Activated T-helper 1 cell treated with anti-CD3 and anti-CD28 coated beads, Interleukin-12 subunit alpha, Interleukin-12 subunit beta, Interleukin-2, Interleukin-4 antibody, amounts not matched to agents 30 ng/mL and 10 ng/mL and 1 ng/mL, durations not matched to agents 14 hours and 24 hours and 36 hours (primary cell): ENCODE measurements at regions of chr14 and their contacts with region 1.

Region 1: GRCh38 chr14:55051426-55052268 is at the start of gene MAPK1IP1L:
- DNase-seq: peak; percentile 90
- H3K4me3 Mint-ChIP-seq: peak within 1 kb of the TSS; percentile 94
- H3K27ac Mint-ChIP-seq: peak within 1 kb of the TSS; percentile 95
- H3K4me1 Mint-ChIP-seq: peaks cover 37% of the 10 kb centered on the region
- H3K27me3 Mint-ChIP-seq: no peaks in the 10 kb centered on the region
- total RNA-seq, gene MAPK1IP1L: 139 and 141 TPM in 2 replicates

Region 2: DNA sequence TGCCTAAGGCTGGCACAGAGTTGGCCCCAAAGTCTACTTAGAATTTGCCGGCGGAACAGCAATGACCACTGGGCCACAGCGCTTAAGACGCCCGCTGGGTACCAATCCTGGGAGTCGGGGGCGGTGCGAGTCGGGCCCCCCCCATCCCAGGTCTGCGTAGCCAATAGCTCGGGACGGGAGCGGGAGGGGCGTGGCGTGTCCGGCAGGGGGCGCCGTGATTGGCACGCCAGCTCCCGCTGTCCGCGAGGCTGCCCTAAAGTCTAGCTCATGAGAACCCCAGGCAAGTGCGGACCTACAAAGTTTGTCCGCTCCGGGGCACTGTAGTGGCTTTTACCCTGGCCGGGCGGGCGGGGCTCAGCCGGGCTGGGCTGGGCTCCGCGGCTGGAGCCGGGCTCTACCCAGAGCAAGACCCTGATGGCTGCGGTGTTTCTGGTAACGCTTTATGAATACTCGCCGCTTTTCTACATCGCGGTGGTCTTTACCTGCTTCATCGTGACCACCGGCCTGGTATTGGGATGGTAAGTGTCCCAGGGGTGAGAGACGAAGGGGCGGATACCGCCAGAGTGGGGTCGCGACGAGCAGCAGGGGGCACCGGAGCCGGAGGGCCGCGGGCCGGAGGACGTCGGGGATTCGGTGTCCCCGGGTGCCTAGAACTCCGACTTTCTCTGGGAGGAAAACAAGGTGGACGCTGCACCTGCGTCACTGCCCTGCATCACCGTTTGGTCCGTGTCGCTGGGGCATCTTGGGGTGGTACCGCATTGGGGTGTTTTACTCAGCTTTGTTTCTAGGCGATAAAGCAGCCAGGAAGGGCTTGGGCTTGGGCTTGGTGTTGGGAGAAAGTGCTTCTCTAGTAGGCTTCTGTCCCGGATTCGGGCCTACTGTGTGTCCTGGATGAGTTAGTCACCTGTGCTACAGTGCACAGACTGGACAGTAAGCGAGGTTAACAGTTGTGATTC is 541.8 kb before region 1 on chr14 and contains the start of gene CGRRF1:
- intact Hi-C with region 1: loop called (anchors 1 kb)
- DNase-seq: peak; percentile 94
- H3K4me3 Mint-ChIP-seq: peak within 1 kb of the TSS; percentile 95
- H3K27ac Mint-ChIP-seq: peak within 1 kb of the TSS; percentile 83
- H3K4me1 Mint-ChIP-seq: peaks cover 40% of the 10 kb centered on the region
- H3K27me3 Mint-ChIP-seq: peaks cover 8% of the 10 kb centered on the region
- total RNA-seq, gene CGRRF1: 8.5 and 13.2 TPM in 2 replicates

Region 3: DNA sequence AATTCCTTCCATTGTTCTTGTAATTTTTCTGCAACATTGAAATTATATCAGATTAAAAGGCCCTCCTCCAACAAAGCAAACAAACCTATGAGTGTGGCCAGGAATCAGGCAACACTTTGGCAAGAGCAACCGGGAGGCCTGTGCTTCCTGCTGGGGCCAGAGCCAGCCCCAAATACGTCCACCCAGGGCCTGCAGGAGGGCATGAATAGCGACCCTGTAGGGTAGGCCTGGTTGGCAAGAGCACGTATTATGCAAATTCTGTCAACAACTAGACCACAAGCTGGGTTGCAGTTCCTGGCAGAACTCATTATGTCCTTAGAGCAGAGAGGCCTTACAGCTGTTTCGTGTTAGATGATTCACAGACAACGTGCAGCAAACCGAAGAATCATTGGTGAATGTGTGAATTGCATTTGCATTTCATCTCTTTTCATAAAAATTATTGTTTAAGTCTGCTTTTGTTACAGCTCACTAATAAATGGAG is 50.5 kb after region 1 on chr14:
- intact Hi-C with region 1: loop called (anchors 2 kb)
- DNase-seq: peak; percentile 41
- H3K4me3 Mint-ChIP-seq: peak overlapping the region; percentile 41
- H3K27ac Mint-ChIP-seq: peak overlapping the region; percentile 94
- H3K4me1 Mint-ChIP-seq: peaks cover 62% of the 10 kb centered on the region
- H3K27me3 Mint-ChIP-seq: no peaks in the 10 kb centered on the region

Region 4: GRCh38 chr14:55191203-55192053 is 139.8 kb after region 1 on chr14 and contains the start of gene DLGAP5:
- intact Hi-C with region 1: loop called (anchors 1 kb)
- DNase-seq: peak; percentile 91
- H3K4me3 Mint-ChIP-seq: peak within 1 kb of the TSS; percentile 94
- H3K27ac Mint-ChIP-seq: peak within 1 kb of the TSS; percentile 66
- H3K4me1 Mint-ChIP-seq: peaks cover 43% of the 10 kb centered on the region
- H3K27me3 Mint-ChIP-seq: no peaks in the 10 kb centered on the region
- total RNA-seq, gene DLGAP5: 22.4 and 26.4 TPM in 2 replicates

Region 5: GRCh38 chr14:55430024-55430690 is 378.5 kb after region 1 on chr14:
- intact Hi-C with region 1: no loop called
- DNase-seq: peak; percentile 32
- H3K4me3 Mint-ChIP-seq: no peak overlapping the region
- H3K27ac Mint-ChIP-seq: no peak overlapping the region
- H3K4me1 Mint-ChIP-seq: peaks cover 21% of the 10 kb centered on the region
- H3K27me3 Mint-ChIP-seq: peaks cover 3% of the 10 kb centered on the region